ENCODE measurements at regions of chr9 and their contacts with region 1.

Region 1: DNA sequence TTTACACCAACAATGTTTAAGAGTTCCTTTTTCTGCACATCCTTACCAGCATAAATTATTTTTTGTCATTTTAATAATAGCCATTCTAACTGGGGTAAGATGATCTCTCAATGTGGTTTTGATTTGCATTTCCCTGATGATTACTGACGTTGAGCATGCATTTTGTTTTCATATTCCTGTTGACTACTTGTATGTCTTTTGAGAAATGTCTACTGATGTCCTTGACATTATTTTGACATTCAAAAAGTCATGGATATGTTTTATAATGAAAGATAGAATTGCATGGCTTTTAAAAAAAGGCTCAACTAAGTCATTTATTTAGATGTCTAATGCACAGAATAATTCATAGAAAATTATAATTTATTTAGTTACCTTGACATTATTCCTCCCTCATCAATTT is 381.6 kb upstream of the C9orf72 start:
- DNase-seq: no peak
- H3K4me3 Mint-ChIP-seq: no peak overlapping the region
- H3K27ac Mint-ChIP-seq: no peak overlapping the region
- H3K4me1 Mint-ChIP-seq: no peaks in the 10 kb centered on the region
- H3K27me3 Mint-ChIP-seq: no peaks in the 10 kb centered on the region
- CTCF ChIP-seq: no peak

Region 2: GRCh38 chr9:27732494-27732893 is 222.4 kb before region 1 on chr9:
- CTCF ChIA-PET with region 1: no interaction called
- intact Hi-C with region 1: loop called (anchors 10 kb)
- DNase-seq: no peak
- H3K4me3 Mint-ChIP-seq: no peak overlapping the region
- H3K27ac Mint-ChIP-seq: no peak overlapping the region
- H3K4me1 Mint-ChIP-seq: no peaks in the 10 kb centered on the region
- H3K27me3 Mint-ChIP-seq: peaks cover 53% of the 10 kb centered on the region
- CTCF ChIP-seq: no peak